Posterior cingulate gyrus (tissue), 11 donors: ENCODE measurements at regions of chr3 and their contacts with region 1.

Region 1: DNA sequence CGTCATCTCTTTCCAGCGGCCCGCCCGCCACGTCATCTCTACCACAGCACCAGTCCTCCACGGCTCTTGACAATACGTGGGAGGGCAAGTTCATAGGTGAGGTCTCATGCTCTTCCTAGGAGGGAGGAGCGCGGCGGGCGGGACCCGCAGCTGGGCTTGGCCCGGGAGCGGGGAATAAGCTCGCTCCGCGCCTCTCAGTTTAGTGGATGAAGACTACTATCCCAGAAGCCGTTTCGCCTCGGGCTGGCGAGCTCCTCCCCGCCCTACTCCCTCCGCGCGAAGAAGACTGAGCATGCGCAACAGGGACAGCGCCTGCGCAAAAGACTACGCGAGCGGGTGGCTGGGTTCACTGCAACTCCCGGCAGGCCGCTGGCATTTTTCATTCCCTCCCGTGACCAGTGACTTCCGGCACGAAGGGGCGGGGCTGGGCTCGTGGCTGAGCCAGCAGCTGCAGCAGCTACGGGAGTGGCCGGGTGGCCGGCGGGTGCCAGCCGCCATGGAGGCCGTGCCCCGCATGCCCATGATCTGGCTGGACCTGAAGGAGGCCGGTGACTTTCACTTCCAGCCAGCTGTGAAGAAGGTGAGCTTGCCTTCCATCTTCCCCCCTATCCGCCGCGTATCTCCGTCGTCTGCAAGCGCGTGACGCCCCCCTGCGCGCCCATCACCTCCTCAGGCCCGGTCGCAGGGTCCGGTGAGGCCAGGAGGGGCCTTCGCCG is at the start of gene PTPN23:
- DNase-seq: peak; percentile 97 to 100 (median 98)

Region 2: DNA sequence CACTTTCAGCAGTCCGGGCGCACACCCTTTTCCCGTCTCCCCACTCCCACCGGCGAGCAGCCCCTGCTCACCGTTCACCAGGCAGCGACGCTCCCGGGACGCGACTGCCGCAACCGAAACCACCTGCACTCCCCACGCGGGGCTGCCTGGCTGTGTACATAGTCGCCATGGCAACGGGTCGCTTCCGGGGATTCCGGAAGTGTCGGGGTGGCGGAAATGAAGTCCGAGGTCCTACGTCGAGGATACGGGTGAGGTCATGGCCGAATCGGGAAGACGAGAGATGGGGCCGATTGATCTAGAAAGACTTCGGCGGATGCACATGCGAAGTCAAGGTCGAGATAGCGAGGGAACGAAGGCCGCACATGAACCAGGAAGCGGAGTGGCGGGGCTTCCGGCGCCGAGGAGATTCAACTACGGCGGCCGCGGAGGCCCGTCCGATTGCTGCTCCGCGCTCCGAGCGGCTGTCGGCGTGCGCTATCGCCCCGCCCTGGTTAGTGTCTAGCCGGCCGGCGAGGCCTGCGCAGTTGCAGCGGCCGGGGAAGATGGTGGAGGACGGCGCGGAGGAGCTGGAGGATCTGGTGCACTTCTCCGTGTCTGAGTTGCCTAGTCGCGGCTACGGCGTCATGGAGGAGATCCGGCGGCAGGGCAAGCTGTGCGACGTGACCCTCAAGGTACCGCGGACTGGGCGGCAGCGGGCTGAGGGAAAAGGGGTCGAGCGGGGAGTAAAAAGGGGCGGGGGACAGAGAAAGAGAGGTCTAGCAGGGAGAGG is 98.2 kb before region 1 on chr3 and contains the starts of genes KIF9 and KLHL18:
- intact Hi-C with region 1: loop called (anchors 10 kb)
- DNase-seq: peak; percentile 88 to 98 (median 93)

Region 3: DNA sequence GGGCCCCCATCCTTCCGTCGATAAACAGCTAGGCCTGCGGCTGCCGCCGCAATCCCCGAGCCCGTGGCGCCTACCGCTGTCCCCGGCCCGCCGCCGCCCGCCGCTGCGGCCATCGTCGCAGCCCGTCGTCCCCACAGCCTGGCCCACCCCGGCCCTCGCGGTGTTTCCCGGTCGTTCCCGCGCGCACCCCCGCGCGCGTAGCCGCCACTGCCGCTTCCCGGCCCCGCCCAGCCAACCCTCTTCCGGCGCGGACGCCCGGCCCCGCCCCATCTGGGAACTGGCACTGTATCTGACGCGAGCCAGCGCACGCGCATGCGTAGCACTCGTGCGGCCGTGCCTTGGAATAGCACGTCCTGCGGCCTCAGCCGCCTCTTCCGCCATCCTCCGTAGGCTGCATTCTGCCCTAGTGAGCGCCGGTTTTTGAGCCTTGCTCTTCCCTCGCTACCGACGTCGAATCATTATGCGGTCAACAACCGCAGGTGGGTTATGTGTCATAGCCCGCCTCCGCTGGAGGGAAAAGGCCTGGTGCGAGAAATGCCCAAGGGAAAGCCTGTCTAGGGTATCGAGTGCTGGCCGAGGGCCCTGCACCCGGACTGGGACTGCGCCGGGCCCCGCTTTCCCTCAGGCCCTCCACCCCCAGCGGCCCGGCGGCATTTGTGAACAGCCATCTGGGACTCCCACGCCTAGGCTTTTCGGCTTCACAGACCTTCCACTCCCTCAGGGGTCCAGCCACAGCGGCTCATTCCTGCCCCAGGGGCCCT is 401.1 kb after region 1 on chr3 and contains the start of gene SMARCC1:
- intact Hi-C with region 1: loop called (anchors 5 kb)
- DNase-seq: peak; percentile 94 to 99 (median 97)